ENCODE measurements at regions of chr9 and their contacts with region 1.

Region 1: DNA sequence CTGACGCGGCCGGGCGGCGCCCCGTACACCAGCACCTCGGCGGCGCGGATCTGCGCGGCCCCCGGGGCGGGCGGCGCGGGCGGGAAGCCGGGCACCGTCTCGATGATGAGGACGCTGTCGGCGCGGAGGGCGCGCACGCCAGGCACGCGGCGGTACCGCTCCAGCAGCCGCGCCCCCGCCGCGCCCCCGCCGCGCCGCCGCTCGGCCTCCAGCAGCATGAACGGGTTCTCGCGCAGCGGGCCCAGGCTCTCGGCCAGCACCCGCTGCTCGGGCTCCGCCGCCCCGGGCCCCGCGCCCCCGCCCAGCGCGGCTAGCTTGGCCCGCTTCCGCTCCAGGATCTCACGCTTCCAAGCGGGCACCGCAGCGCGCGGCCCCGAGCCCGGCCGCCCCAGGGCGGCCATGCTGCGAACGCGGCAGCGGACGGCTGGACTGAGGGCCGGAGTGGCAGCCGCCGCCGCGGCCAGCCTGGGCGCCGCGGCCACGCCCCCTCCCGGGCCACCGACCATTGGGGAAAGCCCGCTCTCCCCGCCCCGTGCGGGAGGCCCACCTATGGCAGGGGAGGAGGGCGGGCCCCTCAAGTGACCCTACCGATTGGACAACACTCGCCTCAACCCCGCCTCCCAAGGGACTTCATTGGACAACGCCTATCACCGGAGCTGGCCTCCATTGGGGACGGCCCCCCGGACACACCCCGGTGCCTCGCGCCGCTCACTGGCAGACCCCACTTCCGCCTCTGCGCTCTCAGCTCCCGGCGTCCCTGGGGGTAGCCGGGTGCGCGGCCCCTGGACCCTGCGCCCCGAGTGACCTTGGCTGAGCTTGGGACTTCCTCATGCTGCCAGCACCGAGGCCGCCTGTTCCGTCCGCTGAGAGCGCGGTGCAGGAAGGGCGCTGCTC is at the start of gene TPRN:
- DNase-seq: peak; percentile 97 to 100
- H3K4me3 ChIP-seq: peak within 1 kb of the TSS; percentile 81
- H3K27ac ChIP-seq: no peak within 1 kb of the TSS
- H3K4me1 ChIP-seq: peaks cover 61% of the 10 kb centered on the region
- H3K27me3 ChIP-seq: no peaks in the 10 kb centered on the region
- CTCF ChIP-seq: no peak
- total RNA-seq, gene TPRN: 61.0 and 61.8 TPM in 2 replicates

Region 2: DNA sequence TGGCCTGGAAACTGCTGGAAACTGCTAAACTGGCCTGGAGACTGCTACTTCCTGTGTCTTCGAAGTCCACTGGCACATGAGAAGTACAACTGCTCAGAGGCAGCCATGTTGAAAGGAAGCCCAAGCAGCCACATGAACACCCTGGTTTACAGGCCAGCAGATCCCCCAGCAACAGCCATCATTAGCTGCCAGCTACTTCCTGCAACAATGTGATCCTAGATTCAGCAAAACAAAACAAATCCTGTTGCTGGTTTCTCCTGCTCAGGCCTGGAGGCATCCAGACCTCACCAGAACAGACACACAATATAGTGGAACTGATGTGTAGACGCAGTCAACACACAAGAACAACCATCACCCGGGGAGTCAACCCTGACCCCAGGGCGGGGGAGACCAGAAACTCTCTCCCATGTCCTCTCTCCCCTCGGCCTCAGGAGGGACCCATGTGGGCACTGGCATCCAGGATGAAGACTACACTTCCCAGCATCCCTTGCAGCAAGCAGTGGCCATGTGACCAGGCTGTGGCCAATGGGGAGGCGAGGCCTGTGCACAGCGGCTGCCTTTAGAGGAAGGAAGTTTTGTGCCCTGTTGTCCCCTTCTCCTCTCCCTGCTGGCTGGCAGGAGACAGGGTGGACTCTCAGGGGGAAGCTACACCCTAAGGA is 427.0 kb before region 1 on chr9:
- CTCF ChIA-PET with region 1: no interaction called
- POLR2A ChIA-PET with region 1: interaction called, 26 read pairs
- intact Hi-C with region 1: no loop called
- DNase-seq: no peak
- H3K4me3 ChIP-seq: no peak overlapping the region
- H3K27ac ChIP-seq: no peak overlapping the region
- H3K4me1 ChIP-seq: no peaks in the 10 kb centered on the region
- H3K27me3 ChIP-seq: peaks cover 15% of the 10 kb centered on the region
- CTCF ChIP-seq: no peak

Region 3: GRCh38 chr9:137150617-137151457 is 49.7 kb before region 1 on chr9:
- CTCF ChIA-PET with region 1: interaction called, 11 read pairs
- POLR2A ChIA-PET with region 1: interaction called, 23 read pairs
- intact Hi-C with region 1: no loop called
- DNase-seq: peak; percentile 76 to 85
- H3K4me3 ChIP-seq: no peak overlapping the region
- H3K27ac ChIP-seq: no peak overlapping the region
- H3K4me1 ChIP-seq: peaks cover 11% of the 10 kb centered on the region
- H3K27me3 ChIP-seq: no peaks in the 10 kb centered on the region
- CTCF ChIP-seq: no peak

Region 4: DNA sequence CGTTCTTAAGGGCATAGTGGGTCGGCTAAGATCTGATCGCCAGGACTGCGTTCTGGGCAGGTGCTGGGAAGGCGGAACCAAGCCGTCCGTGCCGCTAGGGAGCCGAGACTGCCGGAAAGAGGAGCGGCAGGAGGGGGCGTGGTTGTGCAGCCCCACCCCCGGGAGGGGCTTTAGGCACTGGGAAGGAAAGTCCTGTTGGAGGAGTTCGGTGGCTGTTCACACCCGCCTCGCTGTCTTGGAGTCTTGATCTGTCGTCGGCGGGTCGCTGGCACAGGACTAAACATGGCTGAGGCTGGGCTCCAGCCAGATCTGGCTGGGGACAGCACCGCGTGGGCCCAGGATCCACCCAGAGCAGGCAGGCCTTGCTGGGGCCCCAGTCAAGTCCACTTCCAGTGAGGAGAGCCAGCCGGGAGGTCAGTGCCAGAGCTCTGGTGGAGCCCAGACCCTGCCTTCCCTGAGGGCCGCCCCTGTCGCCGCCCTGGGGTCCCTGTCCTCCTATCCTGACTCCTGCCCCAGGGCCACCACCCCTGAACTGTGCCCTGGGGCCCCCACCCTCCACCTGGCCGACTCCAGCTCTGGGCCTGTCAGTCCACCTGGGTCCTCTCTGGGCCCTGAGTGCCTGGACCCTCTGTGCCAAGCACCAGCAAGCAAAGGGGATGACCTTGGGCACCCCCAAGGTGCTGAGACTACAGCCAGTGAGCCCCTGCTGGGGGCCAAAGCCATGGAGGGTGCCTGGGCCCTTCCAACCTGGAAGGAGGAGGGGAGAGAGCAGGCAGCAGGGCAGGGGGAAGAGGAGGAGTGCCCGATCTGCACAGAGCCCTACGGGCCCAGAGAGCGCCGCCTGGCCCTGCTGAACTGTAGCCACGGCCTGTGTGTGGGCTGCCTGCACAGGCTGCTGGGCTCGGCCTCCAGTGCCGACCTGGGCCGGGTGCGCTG is 17.0 kb after region 1 on chr9:
- CTCF ChIA-PET with region 1: no interaction called
- POLR2A ChIA-PET with region 1: interaction called, 8 read pairs
- intact Hi-C with region 1: loop called (anchors 2 kb)
- DNase-seq: peak; percentile 72 to 97
- H3K4me3 ChIP-seq: peak overlapping the region; percentile 26; the same call in 1 of the 2 replicates
- H3K27ac ChIP-seq: no peak overlapping the region
- H3K4me1 ChIP-seq: peaks cover 26% of the 10 kb centered on the region
- H3K27me3 ChIP-seq: no peaks in the 10 kb centered on the region
- CTCF ChIP-seq: no peak

Region 5: DNA sequence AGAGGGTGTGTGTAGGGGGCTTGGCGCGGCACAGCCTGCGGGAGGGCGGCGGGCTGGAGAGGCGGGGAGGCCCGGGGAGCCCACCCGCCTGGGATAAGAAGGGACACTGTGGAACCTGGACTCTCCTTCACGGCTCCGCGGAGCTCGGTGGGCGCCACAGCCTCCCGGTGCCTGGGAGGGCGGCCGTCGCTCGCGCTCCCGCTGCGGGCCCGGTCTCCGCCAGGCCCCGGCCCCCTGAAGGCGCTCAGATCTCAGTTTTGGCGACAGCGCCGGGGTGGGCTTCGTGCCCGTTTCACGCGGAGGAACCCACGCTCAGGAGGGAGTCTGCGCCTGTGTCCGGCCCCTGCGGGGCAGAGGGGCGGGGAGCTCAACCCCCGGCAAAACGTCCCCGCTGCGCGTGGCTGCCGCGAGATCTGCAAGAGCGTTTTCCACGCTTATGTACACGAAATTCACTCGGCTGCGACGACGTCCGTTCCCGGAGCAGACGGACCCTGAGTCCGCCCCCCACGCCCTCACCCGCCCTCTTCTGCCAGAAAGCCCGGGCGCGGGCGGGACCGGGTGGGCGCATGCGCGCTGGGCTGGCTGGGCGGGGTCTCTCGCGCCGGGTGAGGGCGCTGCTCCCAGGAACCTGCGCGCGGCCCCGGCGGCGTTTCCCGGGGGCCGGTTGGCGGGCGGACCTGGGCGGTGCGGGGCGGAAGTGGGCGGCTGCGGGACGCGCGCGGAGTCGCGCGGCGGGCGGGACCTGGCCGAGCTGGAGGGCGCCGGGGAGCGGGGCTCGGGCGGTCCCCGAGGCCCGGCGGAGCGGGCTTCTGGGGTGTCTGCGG is 54.3 kb after region 1 on chr9 and contains the start of gene NELFB:
- CTCF ChIA-PET with region 1: no interaction called
- POLR2A ChIA-PET with region 1: interaction called, 16 read pairs
- intact Hi-C with region 1: no loop called
- DNase-seq: peak; percentile 64 to 98
- H3K4me3 ChIP-seq: peak within 1 kb of the TSS; percentile 92
- H3K27ac ChIP-seq: 0 out of 2 replicates have a peak within 1 kb of the TSS, but pooled peaks have one; percentile 37
- H3K4me1 ChIP-seq: peaks cover 22% of the 10 kb centered on the region
- H3K27me3 ChIP-seq: no peaks in the 10 kb centered on the region
- CTCF ChIP-seq: no peak
- total RNA-seq, gene NELFB: 94.2 and 103 TPM in 2 replicates

Region 6: DNA sequence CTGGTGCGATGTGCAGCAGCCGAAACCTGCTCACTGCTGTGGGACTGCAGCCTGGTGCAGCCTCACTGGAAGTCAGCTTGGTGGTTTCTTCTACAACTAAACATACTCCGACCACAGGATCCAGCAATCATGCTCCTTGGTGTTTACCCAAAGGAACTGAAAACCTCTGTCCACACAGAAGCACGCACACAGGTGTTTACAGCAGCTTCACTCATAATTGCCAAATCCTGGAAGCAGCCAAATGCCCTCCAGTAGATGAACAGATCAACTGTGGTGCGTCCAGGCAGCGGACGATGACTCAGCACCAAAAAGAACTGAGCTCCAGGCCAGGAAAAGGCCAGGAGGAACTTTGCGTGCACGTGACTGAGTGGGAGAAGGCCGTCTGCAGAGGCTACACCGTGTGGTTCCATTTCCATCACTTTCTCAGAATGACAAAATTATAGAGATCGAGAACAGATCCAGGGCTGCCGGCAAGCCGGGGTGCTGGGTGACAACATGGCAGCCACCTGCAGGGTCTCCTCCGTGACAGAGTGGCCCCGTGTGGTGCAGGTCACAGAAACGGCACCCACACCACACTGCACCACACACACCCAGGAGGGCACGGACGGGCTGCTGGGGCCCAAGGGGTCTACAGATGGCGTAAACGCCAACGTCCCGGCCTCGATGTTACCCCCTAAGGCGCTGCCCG is 281.7 kb after region 1 on chr9:
- CTCF ChIA-PET with region 1: no interaction called
- POLR2A ChIA-PET with region 1: no interaction called
- intact Hi-C with region 1: no loop called
- DNase-seq: peak; percentile 71 to 85
- H3K4me3 ChIP-seq: no peak overlapping the region
- H3K27ac ChIP-seq: peak overlapping the region; percentile 37
- H3K4me1 ChIP-seq: peaks cover 17% of the 10 kb centered on the region
- H3K27me3 ChIP-seq: no peaks in the 10 kb centered on the region
- CTCF ChIP-seq: no peak

Region 7: GRCh38 chr9:137492464-137493162 is 292.1 kb after region 1 on chr9:
- CTCF ChIA-PET with region 1: no interaction called
- POLR2A ChIA-PET with region 1: no interaction called
- intact Hi-C with region 1: no loop called
- DNase-seq: peak in 1 of 2 experiments; percentile 53
- H3K4me3 ChIP-seq: no peak overlapping the region
- H3K27ac ChIP-seq: no peak overlapping the region
- H3K4me1 ChIP-seq: no peaks in the 10 kb centered on the region
- H3K27me3 ChIP-seq: no peaks in the 10 kb centered on the region
- CTCF ChIP-seq: no peak